Activated naive CD4-positive, alpha-beta T cell treated with anti-CD3 and anti-CD28 coated beads for 36 hours (primary cell): ENCODE measurements at regions of chrX and their contacts with region 1.

Region 1: DNA sequence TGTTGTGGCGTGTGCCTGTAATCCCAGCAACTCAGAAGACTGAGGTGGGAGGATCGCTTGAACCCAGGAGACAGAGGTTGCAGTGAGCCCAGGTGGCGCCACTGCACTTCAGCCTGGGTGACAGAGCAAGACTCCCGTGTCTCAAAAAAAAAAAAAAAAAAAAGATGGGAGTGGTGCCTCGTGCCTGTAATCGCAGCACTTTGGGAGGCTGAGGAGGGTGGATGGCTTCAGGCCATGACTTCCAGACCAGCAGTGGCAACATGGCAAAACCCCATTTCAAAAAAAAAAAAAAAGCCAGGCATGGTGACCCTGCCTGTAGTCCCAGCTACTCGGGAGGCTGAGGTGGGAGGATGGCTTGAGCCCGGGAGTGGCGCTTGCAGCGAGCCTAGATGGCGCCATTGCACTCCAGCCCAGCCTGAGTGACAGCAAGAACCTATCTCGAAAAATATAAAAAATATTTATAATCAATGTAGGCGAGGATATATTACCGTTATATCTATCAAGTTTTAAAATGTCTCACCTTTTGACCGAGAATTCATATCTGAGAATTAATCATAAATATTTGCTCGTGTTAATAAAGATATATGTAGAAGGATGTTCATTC is 27.0 kb downstream of the EIF2S3 start:
- DNase-seq: peak; percentile 73
- H3K4me3 Mint-ChIP-seq: peak overlapping the region; percentile 29
- H3K27ac Mint-ChIP-seq: no peak overlapping the region
- H3K4me1 Mint-ChIP-seq: peaks cover 33% of the 10 kb centered on the region
- H3K27me3 Mint-ChIP-seq: no peaks in the 10 kb centered on the region

Region 2: DNA sequence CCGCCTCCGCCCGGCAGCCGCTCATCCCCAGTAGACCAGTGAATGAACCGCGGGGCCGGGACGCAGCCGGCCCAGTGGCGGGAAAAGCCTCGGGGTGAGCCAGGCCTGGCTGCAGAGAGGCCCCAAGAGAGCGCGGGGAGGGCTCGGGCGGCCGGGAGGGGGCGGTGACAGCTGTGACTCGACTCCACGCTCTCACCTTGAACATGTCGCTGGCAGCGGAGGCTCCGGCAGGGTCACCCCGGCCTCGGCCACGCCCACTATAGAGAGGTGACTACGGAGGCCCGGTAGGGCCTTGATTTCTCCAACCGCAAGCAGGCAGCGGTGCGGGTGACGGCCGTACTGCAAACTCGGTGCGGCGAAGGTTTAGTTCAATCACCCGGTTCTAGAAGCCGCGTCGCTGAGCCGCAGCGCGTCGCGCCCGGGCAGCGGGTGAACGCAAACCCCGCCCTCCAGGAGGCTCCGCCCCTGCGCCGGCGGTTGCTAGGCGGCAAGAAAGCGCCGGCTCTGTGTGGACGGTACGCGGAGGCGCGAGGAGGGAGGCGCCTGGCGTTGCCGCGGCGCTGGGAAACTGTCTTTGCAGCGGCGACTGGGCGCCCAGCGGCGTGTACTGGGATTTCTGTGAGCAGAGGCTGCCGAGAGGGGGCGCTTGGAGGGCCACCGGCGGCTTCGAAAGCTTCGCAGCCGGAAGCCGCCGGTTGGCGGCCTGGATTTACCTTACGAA is 174.1 kb before region 1 on chrX and contains the starts of genes APOO and CXorf58:
- CTCF ChIA-PET with region 1: no interaction called
- intact Hi-C with region 1: loop called (anchors 1 kb)
- DNase-seq: peak; percentile 93
- H3K4me3 Mint-ChIP-seq: peak within 1 kb of the TSS; percentile 75
- H3K27ac Mint-ChIP-seq: peak within 1 kb of the TSS; percentile 91
- H3K4me1 Mint-ChIP-seq: peaks cover 21% of the 10 kb centered on the region
- H3K27me3 Mint-ChIP-seq: no peaks in the 10 kb centered on the region
- total RNA-seq, gene APOO: 41.3 to 49.5 TPM
- total RNA-seq, gene CXorf58: 0.20 TPM in 1 of 2 experiments, not detected in the other

Region 3: DNA sequence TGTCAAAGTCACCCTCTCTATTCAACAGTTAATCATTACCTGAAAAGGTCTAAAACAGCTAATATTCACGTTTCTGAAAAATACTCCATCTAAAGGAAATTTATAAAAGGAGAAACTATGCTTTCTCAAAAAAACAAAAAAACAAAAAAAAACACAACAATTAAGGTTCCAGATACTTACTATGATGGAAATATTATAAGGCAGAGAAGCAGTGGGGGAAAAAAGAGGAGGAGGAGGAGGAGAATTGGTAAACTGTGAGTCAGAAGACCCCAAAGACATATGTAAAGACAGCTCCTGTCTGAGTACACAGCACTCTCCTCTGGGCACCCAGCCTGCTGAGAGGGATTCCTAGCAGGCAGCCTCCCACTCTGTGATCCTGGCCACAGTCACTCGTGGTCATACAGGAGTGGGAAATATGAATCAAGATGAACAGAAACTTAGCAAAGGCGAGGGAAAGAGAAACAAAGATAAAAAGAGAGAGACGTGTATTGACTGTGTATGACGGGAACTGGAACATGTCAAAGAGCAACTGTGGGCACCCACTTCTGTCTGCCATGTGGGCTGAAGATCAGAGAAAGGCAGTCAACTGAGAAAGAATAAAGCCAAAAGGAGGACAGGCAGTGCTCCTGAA is 67.3 kb before region 1 on chrX:
- CTCF ChIA-PET with region 1: no interaction called
- intact Hi-C with region 1: loop called (anchors 1 kb)
- DNase-seq: peak; percentile 76
- H3K4me3 Mint-ChIP-seq: peak overlapping the region; percentile 67
- H3K27ac Mint-ChIP-seq: peak overlapping the region; percentile 92
- H3K4me1 Mint-ChIP-seq: peaks cover 37% of the 10 kb centered on the region
- H3K27me3 Mint-ChIP-seq: no peaks in the 10 kb centered on the region

Region 4: DNA sequence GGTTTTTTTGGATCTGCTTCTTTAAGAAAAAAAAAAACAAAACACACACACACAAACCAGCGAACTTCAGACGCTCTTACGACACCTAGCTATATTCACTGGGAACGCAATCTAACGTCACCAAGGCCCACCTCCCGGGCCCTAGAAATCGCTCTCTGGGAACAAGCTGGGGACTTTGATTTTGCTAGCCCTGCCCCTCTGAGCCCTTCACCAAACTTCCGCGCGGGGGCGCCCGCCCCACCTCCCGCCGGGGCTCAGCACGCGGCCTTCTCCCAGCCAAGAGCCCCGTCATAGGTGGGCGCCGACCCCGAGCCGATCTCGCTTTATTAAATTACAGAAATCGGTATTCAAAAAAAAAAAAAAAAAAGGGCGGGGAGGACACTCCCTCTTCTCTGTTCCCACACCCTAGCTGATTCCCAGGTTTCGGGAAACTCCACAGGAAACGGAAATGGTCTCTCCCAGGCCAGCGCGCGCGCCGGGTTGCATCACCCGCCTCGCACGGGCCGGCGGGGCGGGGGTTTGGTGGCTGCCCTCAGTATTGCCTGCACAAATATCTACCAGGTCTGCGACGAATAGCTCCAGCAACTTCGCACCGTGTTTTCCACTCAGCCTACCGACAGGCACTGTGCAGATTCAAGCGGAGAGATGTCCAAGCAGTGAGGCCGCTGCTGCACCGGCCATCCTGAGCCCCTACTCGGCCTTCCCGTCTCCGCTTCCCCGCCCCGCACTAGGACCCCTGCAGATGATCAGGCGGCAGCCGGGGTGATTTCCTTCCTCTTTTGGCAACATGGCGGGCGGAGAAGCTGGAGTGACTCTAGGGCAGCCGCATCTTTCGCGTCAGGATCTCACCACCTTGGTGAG is 27.4 kb before region 1 on chrX and contains the start of gene EIF2S3:
- CTCF ChIA-PET with region 1: interaction called, 3 read pairs
- intact Hi-C with region 1: loop called (anchors 1 kb)
- DNase-seq: peak; percentile 87
- H3K4me3 Mint-ChIP-seq: no peak within 1 kb of the TSS
- H3K27ac Mint-ChIP-seq: no peak within 1 kb of the TSS
- H3K4me1 Mint-ChIP-seq: peaks cover 10% of the 10 kb centered on the region
- H3K27me3 Mint-ChIP-seq: no peaks in the 10 kb centered on the region
- total RNA-seq, gene EIF2S3: 366 to 386 TPM

Region 5: GRCh38 chrX:24169211-24169610 is 87.4 kb after region 1 on chrX:
- CTCF ChIA-PET with region 1: interaction called, 3 read pairs
- intact Hi-C with region 1: loop called (anchors 1 kb)
- DNase-seq: peak; percentile 14
- H3K4me3 Mint-ChIP-seq: peak overlapping the region; percentile 6
- H3K27ac Mint-ChIP-seq: peak overlapping the region; percentile 84
- H3K4me1 Mint-ChIP-seq: peaks cover 62% of the 10 kb centered on the region
- H3K27me3 Mint-ChIP-seq: no peaks in the 10 kb centered on the region

Region 6: DNA sequence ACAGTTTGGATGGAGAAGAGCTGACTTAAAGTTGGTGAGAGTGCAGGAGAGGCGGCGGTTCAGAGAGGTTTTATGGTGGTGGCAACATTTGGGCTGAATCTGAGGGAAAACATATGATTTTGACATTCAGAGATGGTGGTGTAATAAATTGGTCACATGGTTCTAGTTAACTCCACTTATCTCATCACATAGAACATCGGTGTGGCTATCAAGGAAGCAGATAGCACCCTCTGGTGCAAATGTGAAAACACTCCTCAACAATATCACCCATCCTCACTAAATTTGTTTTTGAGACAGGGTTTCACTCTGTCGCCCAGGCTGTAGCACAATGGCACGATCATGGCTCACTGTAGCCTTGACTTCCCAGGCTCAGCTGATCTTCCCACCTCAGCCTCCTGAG is 203.3 kb after region 1 on chrX:
- CTCF ChIA-PET with region 1: no interaction called
- intact Hi-C with region 1: no loop called
- DNase-seq: no peak
- H3K4me3 Mint-ChIP-seq: no peak overlapping the region
- H3K27ac Mint-ChIP-seq: no peak overlapping the region
- H3K4me1 Mint-ChIP-seq: peaks cover 3% of the 10 kb centered on the region
- H3K27me3 Mint-ChIP-seq: no peaks in the 10 kb centered on the region

Region 7: DNA sequence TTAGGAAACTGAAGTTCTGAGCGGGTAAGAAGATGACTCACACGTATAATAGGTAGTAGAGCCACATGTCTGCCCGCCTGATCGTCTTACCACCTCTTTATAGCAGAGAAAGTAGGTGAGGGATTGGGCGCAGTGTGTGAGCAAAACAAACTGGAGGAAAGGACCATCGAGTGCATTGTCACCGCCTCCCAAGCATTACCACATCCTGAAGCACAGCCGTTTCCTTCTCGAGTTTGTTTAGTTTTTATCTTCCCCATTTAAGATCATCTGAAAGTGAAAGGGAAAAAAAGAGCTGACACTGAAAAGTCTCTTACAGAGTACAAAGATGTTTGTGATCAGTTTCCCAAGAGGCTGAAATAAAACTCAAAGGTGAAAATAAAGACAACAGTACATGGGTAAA is 398.2 kb after region 1 on chrX:
- CTCF ChIA-PET with region 1: no interaction called
- intact Hi-C with region 1: loop called (anchors 2 kb)
- DNase-seq: peak; percentile 86
- H3K4me3 Mint-ChIP-seq: peak overlapping the region; percentile 69
- H3K27ac Mint-ChIP-seq: peak overlapping the region; percentile 96
- H3K4me1 Mint-ChIP-seq: peaks cover 69% of the 10 kb centered on the region
- H3K27me3 Mint-ChIP-seq: no peaks in the 10 kb centered on the region